CD8-positive, alpha-beta T cell (primary cell): ENCODE measurements at regions of chrX and their contacts with region 1.

Region 1: GRCh38 chrX:133792198-133792953 is 193.0 kb downstream of the GPC3 start:
- DNase-seq: peak; percentile 17 to 71 (median 42)
- ATAC-seq: peak; percentile 51
- H3K4me3 ChIP-seq: no peak overlapping the region
- H3K4me3 Mint-ChIP-seq: no peak overlapping the region
- H3K27ac ChIP-seq: no peak overlapping the region
- H3K27ac Mint-ChIP-seq: no peak overlapping the region
- H3K4me1 ChIP-seq: no peaks in the 10 kb centered on the region
- H3K4me1 Mint-ChIP-seq: no peaks in the 10 kb centered on the region
- H3K27me3 ChIP-seq: no peaks in the 10 kb centered on the region
- H3K27me3 Mint-ChIP-seq: no peaks in the 10 kb centered on the region
- CTCF ChIP-seq: peak; percentile 84

Region 2: DNA sequence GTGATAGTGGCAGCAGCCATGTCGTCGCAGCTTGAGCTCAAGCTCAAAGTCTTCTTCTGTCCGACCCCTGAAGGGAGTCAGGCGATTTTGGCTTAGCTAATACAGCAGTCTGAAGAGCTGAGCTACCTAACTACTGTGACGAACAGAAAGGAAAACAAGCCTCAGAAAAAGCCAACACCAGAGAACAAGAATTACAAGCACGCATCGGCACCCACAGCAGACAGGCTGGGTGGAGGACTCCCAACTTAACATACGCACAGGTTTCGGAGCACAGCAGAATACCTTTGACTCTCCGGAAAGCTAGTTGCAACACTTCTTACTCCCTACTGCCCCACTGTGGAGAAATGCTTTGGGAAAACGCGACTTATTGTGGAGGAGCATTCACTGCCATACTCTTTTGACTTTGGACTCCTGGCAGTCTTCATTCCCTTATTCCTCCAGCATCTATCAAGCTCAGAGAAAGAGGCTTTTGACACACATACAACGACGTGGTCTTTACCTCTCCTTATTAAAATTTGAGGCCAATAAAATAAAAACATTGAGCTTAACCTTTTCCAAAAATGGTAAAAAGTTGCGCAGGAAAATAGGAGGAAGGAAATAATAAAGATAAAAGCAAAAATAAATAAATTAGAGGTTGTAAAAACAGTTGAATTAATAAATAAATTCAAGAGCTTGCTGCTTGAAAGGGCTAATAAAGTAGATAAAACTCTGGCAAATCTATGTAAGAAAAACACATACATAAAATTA is 234.4 kb after region 1 on chrX:
- CTCF ChIA-PET with region 1: interaction called, 8 read pairs
- POLR2A ChIA-PET with region 1: no interaction called
- intact Hi-C with region 1: loop called in 1 of 2 experiments (anchors 2 kb)
- DNase-seq: peak in 4 of 9 experiments; percentile 0 to 44 (median 13)
- ATAC-seq: peak; percentile 36
- H3K4me3 ChIP-seq: no peak overlapping the region
- H3K4me3 Mint-ChIP-seq: peak overlapping the region; percentile 39
- H3K27ac ChIP-seq: no peak overlapping the region
- H3K27ac Mint-ChIP-seq: no peak overlapping the region
- H3K4me1 ChIP-seq: no peaks in the 10 kb centered on the region
- H3K4me1 Mint-ChIP-seq: peaks cover 7% of the 10 kb centered on the region
- H3K27me3 ChIP-seq: no peaks in the 10 kb centered on the region
- H3K27me3 Mint-ChIP-seq: no peaks in the 10 kb centered on the region
- CTCF ChIP-seq: no peak

Region 3: DNA sequence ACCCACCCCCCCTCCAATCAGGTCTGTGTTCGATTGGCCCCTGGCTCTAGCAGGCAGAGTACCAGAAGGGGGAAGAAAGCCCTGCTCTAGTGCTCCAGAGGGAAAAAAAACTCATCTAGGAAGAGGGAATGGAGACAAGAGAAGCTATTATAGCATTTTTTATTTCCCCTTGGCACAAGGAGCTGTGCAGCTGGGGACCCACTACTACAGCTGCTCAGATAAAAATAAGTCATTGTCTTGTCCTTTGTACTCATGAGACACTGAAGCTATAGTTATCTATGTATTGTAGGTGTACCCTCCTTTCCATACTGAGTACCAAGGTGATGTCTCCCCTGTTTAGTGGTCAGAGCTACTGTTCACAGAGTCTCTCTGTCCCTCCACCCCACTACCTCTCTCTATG is 458.9 kb after region 1 on chrX:
- CTCF ChIA-PET with region 1: interaction called, 10 read pairs
- POLR2A ChIA-PET with region 1: no interaction called
- intact Hi-C with region 1: loop called in 1 of 2 experiments (anchors 1 kb)
- DNase-seq: no peak
- ATAC-seq: no peak
- H3K4me3 ChIP-seq: no peak overlapping the region
- H3K4me3 Mint-ChIP-seq: no peak overlapping the region
- H3K27ac ChIP-seq: no peak overlapping the region
- H3K27ac Mint-ChIP-seq: no peak overlapping the region
- H3K4me1 ChIP-seq: no peaks in the 10 kb centered on the region
- H3K4me1 Mint-ChIP-seq: no peaks in the 10 kb centered on the region
- H3K27me3 ChIP-seq: no peaks in the 10 kb centered on the region
- H3K27me3 Mint-ChIP-seq: no peaks in the 10 kb centered on the region
- CTCF ChIP-seq: no peak

Region 4: GRCh38 chrX:134460005-134460861 is 667.9 kb after region 1 on chrX and contains the start of gene HPRT1:
- CTCF ChIA-PET with region 1: no interaction called
- POLR2A ChIA-PET with region 1: no interaction called
- intact Hi-C with region 1: loop called in 1 of 2 experiments (anchors 5 kb)
- DNase-seq: peak; percentile 57 to 88 (median 75)
- ATAC-seq: peak; percentile 99
- H3K4me3 ChIP-seq: peak within 1 kb of the TSS; percentile 55 to 63
- H3K4me3 Mint-ChIP-seq: peak within 1 kb of the TSS; percentile 88
- H3K27ac ChIP-seq: peak within 1 kb of the TSS; percentile 39 to 51
- H3K27ac Mint-ChIP-seq: peak within 1 kb of the TSS; percentile 71
- H3K4me1 ChIP-seq: peaks cover 7% of the 10 kb centered on the region
- H3K4me1 Mint-ChIP-seq: peaks cover 12% of the 10 kb centered on the region
- H3K27me3 ChIP-seq: no peaks in the 10 kb centered on the region
- H3K27me3 Mint-ChIP-seq: no peaks in the 10 kb centered on the region
- CTCF ChIP-seq: no peak
- total RNA-seq, gene HPRT1: 12.3 to 12.6 TPM

Region 5: GRCh38 chrX:134512566-134512965 is 720.2 kb after region 1 on chrX:
- CTCF ChIA-PET with region 1: no interaction called
- POLR2A ChIA-PET with region 1: no interaction called
- intact Hi-C with region 1: no loop called
- DNase-seq: no peak
- ATAC-seq: no peak
- H3K4me3 ChIP-seq: no peak overlapping the region
- H3K4me3 Mint-ChIP-seq: no peak overlapping the region
- H3K27ac ChIP-seq: no peak overlapping the region
- H3K27ac Mint-ChIP-seq: no peak overlapping the region
- H3K4me1 ChIP-seq: no peaks in the 10 kb centered on the region
- H3K4me1 Mint-ChIP-seq: no peaks in the 10 kb centered on the region
- H3K27me3 ChIP-seq: no peaks in the 10 kb centered on the region
- H3K27me3 Mint-ChIP-seq: no peaks in the 10 kb centered on the region
- CTCF ChIP-seq: no peak

Region 6: DNA sequence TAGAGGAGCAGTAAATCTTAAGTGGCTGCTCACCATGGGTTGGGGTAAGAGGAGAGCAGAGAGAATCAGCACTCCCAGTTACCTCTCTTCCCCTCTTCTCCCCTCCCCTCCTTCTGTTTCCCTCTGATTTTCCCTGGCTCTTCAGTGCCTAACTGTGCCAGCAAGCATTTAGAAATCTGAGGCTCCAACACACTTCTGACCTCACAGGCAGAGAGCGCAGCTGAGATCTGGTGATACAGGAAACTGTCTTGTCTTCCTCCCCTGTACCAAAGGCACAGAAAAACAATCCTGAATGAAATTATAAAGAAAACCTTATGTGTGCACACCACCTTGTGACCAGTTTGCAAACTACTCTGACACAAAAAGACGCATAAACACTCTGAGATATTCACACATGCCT is 1116.0 kb after region 1 on chrX:
- CTCF ChIA-PET with region 1: interaction called, 3 read pairs
- POLR2A ChIA-PET with region 1: no interaction called
- intact Hi-C with region 1: loop called in 1 of 2 experiments (anchors 5 kb)
- DNase-seq: peak in 3 of 9 experiments; percentile 10 to 43 (median 21)
- ATAC-seq: peak; percentile 79
- H3K4me3 ChIP-seq: no peak overlapping the region
- H3K4me3 Mint-ChIP-seq: no peak overlapping the region
- H3K27ac ChIP-seq: no peak overlapping the region
- H3K27ac Mint-ChIP-seq: peak overlapping the region; percentile 2
- H3K4me1 ChIP-seq: no peaks in the 10 kb centered on the region
- H3K4me1 Mint-ChIP-seq: peaks cover 10% of the 10 kb centered on the region
- H3K27me3 ChIP-seq: no peaks in the 10 kb centered on the region
- H3K27me3 Mint-ChIP-seq: no peaks in the 10 kb centered on the region
- CTCF ChIP-seq: no peak